ENCODE measurements at regions of chr5 and their contacts with region 1.

Region 1: DNA sequence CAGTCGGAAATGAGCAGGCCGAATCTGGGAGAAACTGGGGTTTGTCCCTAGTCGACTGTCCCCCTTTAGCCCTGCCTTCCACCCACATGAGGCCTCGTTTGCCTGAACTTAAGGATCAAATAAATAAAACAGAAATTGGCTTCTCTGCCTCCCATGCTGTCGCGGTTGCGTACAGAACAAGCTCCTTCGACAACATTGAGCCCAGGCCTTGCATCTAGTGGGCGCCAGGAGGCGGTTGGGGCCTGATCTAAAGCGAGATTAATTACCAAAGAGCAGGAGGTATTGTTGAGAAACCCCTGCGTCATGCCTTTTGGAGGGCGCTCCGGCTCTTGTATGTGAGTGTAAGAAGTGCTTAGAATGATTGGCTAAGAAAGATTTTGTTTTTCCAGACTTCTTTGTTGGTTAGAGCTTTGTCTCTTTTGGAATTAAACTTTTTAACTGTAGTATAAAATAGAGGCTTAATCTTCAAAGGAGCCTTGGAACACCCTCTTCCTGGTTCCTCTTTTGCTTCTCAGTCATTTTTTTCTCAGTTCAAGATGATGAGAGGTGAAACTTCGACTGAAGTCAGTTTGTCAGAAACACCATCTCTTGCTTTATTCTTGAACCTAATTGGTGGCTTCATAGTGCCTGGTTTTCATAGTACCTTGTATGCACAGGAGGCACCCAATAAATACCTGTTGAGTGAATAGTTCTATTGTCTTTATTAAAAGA is 827 bp downstream of the ATP6V0E1 start:
- DNase-seq: peak; percentile 83
- H3K4me3 Mint-ChIP-seq: peak overlapping the region; percentile 97
- H3K27ac Mint-ChIP-seq: peak overlapping the region; percentile 99
- H3K4me1 Mint-ChIP-seq: peaks cover 38% of the 10 kb centered on the region
- H3K27me3 Mint-ChIP-seq: no peaks in the 10 kb centered on the region

Region 2: DNA sequence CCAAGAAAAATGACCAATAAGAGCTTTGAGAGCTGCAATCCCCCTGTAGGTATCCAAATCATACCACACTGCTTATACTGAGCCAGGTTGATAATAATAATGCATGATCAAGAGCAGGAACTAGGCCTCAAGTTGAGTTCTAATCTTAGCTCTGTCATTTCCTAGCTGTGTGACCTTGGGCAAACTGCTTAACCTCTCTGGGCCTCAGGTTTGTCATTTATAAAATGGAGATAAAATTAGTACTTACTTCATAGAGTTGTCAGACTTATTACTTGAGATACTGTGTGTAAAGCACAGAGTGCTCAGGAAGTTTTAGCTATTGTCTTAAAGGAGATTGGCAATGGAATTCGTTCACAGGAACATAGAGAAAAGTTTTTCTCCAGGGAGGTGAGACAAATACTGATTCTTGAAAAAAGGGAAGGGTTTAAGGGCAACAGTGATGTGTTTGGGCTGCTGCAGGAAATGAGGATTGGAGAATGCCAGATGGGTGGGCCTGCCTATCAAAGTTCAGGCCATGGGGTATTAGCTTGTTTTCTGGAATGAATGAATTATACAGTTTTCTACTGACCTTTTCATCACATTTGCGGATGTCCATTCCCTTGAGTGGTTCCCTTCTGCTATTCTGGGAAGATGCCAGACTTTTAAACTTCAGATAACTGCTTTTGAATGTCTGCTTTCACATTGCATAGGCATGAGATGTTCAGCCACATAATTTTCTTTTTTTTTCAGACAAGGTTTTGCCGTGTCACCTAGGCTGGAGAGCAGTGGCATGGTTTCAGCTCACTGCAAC is 11.1 kb before region 1 on chr5:
- CTCF ChIA-PET with region 1: interaction called, 10 read pairs
- POLR2A ChIA-PET with region 1: no interaction called
- DNase-seq: no peak
- H3K4me3 Mint-ChIP-seq: no peak overlapping the region
- H3K27ac Mint-ChIP-seq: no peak overlapping the region
- H3K4me1 Mint-ChIP-seq: no peaks in the 10 kb centered on the region
- H3K27me3 Mint-ChIP-seq: peaks cover 2% of the 10 kb centered on the region

Region 3: DNA sequence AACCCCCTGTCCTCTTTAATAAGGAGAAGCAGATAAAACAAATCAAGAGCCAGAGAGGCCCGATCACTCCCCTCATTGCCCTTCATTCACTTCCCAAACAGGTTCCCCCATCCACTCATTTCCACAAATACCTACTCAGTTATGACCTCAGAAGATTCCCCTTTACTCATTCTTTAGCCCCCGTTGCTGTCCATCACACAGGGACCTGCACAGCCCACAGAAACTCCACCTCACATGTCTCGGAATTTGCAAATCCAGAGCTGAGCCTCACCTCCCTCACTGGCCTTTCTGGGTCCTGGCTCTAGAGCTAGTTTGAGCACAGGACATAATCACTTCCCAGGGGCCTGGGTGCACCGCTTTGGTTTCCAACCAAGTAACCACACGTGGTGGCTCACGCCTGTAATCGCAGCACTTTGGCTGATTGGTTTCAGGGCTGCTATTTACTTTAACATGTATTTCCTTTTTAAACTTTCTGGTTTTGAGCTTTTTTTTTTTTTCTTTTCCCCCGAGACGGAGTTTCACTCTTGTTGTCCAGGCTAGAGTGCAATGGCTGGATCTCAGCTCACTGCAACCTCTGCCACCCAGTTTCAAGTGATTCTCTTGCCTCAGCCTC is 16.9 kb after region 1 on chr5:
- CTCF ChIA-PET with region 1: no interaction called
- POLR2A ChIA-PET with region 1: no interaction called
- DNase-seq: no peak
- H3K4me3 Mint-ChIP-seq: no peak overlapping the region
- H3K27ac Mint-ChIP-seq: no peak overlapping the region
- H3K4me1 Mint-ChIP-seq: peaks cover 45% of the 10 kb centered on the region
- H3K27me3 Mint-ChIP-seq: no peaks in the 10 kb centered on the region

Region 4: DNA sequence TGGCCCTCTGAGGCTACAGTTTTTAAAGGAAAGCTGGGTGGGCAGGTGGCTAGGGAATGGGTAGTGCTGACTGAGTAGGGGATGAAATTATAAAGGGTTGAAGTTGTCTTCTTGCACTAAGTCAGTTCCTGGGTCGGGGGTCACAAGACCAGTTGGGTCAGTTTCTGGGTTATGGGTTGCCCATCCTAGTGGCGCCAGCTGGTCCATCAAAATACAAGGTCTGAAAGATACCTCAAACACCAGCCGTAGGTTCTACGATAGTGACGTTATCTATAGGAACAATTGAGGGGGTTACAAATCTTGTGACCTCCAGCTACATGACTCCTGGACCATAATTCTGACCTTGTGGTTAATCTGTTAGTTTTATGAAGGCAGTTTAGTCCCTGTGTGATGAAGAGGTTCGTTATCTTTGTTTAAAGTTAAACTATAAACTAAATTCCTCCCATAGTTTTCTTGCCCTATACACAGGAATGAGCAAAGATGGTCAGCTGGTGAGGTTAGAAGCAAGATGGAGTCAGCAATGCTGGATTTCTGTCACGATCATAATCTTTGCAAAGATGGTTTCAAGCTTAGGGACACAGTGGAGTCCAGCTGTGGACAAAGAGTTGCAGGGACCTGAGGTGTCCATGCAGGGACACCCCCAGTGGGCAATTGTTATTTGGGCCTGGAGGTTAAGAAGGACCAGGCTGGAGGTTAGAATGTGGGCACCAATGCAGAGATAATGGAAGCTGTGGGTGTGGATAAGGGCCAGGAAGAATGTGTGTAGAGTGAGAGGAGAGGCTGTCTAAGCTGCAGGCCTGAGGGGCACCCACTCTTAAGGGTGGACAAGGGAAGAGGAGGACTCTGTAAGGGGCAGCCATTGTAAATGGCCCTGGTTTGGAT is 57.7 kb after region 1 on chr5:
- CTCF ChIA-PET with region 1: no interaction called
- POLR2A ChIA-PET with region 1: no interaction called
- DNase-seq: no peak
- H3K4me3 Mint-ChIP-seq: no peak overlapping the region
- H3K27ac Mint-ChIP-seq: no peak overlapping the region
- H3K4me1 Mint-ChIP-seq: peaks cover 17% of the 10 kb centered on the region
- H3K27me3 Mint-ChIP-seq: no peaks in the 10 kb centered on the region

Region 5: GRCh38 chr5:173057062-173057924 is 72.9 kb after region 1 on chr5:
- CTCF ChIA-PET with region 1: interaction called, 4 read pairs
- POLR2A ChIA-PET with region 1: interaction called, 10 read pairs
- DNase-seq: peak; percentile 100
- H3K4me3 Mint-ChIP-seq: peak overlapping the region; percentile 95
- H3K27ac Mint-ChIP-seq: peak overlapping the region; percentile 94
- H3K4me1 Mint-ChIP-seq: peaks cover 50% of the 10 kb centered on the region
- H3K27me3 Mint-ChIP-seq: no peaks in the 10 kb centered on the region

Region 6: DNA sequence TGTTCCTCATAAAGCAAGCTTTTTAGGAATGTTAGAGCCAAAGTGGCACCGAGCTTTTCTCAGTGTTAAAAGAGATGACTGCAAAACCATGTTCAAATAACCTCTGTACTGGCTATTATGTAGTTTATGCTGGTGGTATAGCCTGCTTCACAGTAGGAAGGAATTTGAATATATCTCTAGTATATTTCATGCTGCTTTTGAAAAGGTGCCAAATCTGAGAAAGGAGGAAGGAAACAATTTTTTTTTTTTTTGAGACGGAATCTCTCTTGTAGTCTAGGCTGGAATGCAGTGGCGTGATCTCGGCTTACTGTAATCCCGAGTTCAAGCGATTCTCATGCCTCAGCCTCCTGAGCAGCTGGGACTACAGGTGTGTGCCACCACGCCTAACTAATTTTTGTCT is 85.3 kb after region 1 on chr5:
- CTCF ChIA-PET with region 1: no interaction called
- POLR2A ChIA-PET with region 1: no interaction called
- DNase-seq: no peak
- H3K4me3 Mint-ChIP-seq: no peak overlapping the region
- H3K27ac Mint-ChIP-seq: no peak overlapping the region
- H3K4me1 Mint-ChIP-seq: peaks cover 25% of the 10 kb centered on the region
- H3K27me3 Mint-ChIP-seq: no peaks in the 10 kb centered on the region

Measured in activated CD4-positive, alpha-beta T cell treated with anti-CD3 and anti-CD28 coated beads, Interleukin-2, amount 10 ng/mL, durations not matched to agents 7 days and 5 days (primary cell).